Gastrocnemius medialis (tissue), 4 donors: ENCODE measurements at regions of chr11 and their contacts with region 1.

Region 1: DNA sequence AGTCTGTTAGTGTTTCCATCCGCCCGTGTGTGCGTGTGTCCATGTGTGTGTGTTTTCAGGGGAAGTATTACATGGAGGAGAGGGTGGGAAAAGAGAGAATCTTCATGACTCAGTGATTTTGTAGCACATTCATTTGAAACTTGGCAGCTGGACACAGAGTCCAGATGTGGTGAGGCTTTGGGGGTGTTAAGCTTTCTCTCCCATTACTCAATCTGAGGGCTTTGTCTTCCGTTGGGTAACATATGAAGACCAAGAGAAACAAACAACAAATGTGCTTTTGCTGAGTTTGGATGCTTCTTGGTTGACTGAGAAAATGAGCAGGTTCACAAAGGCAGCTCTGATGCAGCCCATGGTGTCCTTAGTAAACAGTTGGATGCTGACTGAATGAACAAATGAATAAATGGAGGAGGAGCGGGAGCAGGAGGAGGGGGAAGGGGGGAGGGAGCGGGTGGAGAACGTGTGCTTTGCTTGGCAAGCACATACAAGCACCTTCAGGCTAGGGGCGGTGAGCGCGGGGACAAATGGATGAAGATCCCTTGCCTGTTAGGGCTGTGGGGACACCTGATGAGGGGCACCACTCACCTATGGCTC is 104.3 kb downstream of the ST3GAL4 start:
- DNase-seq: no peak
- ATAC-seq: peak in 1 of 2 donors; percentile 50
- H3K4me3 ChIP-seq: no peak overlapping the region
- H3K27ac ChIP-seq: no peak overlapping the region
- H3K4me1 ChIP-seq: no peaks in the 10 kb centered on the region
- H3K27me3 ChIP-seq: no peaks in the 10 kb centered on the region
- CTCF ChIP-seq: no peak
- POLR2A ChIP-seq: no peak

Region 2: DNA sequence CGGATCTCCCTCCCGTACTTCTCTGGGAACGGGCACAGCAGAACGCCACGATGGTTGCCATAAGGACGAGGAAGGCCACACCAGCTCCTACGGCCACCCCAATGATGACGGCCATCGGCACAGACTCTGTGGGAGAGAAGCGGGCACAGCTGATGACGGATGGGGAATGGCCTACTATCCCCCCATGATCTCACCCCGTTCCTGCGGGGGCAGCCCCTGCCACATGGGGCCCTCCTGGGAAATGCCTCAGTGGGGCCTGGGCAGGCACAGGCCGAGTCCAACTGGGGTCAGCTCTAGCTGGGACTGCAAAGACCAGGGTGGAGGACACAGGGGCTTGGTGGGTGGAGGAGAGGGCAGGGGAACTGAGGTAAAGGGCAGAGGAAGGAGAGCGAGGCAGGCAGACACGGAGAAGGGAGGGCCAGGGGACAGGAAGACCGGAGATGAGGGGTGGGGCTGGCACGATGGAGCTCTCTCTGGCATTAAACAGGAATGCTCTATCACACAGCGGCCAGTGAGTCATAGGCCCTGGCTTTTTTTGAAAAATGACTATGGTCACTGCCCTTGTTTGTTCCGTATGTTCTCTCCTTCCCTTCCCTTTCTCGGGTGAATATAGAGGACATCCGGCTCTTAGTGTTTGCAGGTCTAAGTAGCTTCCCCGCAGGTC is 28.3 kb before region 1 on chr11:
- in situ Hi-C with region 1: no loop called
- intact Hi-C with region 1: no loop called
- DNase-seq: peak; percentile 24 to 43
- ATAC-seq: peak; percentile 60 to 73
- H3K4me3 ChIP-seq: no peak overlapping the region
- H3K27ac ChIP-seq: peak overlapping the region in 1 of 4 donors; percentile 40
- H3K4me1 ChIP-seq: peaks cover 5 to 14% of the 10 kb centered on the region in 2 donors
- H3K27me3 ChIP-seq: no peaks in the 10 kb centered on the region
- CTCF ChIP-seq: no peak
- POLR2A ChIP-seq: no peak

Region 3: GRCh38 chr11:126592496-126593410 is 133.0 kb after region 1 on chr11:
- in situ Hi-C with region 1: no loop called
- intact Hi-C with region 1: no loop called
- DNase-seq: no peak
- ATAC-seq: no peak
- H3K4me3 ChIP-seq: no peak overlapping the region
- H3K27ac ChIP-seq: no peak overlapping the region
- H3K4me1 ChIP-seq: no peaks in the 10 kb centered on the region
- H3K27me3 ChIP-seq: no peaks in the 10 kb centered on the region
- CTCF ChIP-seq: no peak
- POLR2A ChIP-seq: no peak

Region 4: GRCh38 chr11:127950162-127950561 is 1490.4 kb after region 1 on chr11:
- in situ Hi-C with region 1: no loop called
- intact Hi-C with region 1: loop called (anchors 10 kb)
- DNase-seq: no peak
- ATAC-seq: no peak
- H3K4me3 ChIP-seq: no peak overlapping the region
- H3K27ac ChIP-seq: no peak overlapping the region
- H3K4me1 ChIP-seq: no peaks in the 10 kb centered on the region
- H3K27me3 ChIP-seq: no peaks in the 10 kb centered on the region
- CTCF ChIP-seq: no peak
- POLR2A ChIP-seq: no peak